Ascending aorta (tissue), 2 donors: ENCODE measurements at regions of chr16 and their contacts with region 1.

Region 1: DNA sequence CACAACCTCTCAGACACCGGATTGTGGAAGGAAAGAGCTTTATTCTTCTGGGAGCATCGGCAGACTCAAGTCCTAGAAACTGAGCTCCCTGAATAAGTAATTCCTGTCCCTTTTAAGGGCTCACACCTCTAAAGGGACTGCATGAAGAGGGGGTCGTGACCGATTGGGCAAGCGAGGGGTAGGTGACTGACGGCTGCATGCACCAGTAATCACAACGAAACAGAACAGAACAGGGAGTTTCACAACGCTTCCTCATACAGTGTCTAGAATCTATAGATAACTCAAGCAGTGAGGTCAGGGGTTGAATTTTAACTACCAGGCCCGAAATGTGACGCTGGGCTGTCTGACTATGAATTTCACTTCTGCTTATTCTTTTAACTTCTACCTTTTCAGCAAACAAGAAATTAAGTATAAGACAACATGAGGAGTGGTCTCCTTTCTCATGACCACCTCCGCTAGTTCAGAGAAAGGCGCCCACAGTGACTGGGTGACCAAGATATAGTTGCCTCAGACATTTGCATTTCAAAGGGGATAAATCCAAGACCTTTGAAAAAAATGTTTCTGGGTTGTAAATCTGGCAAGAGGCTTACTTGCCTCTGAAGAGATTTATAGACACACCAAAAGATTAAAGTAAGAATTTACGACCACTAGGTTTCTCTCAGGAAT is 88.4 kb upstream of the ATF7IP2 start:
- DNase-seq: peak in 1 of 2 donors; percentile 58
- H3K4me3 ChIP-seq: no peak overlapping the region
- H3K27ac ChIP-seq: no peak overlapping the region
- H3K4me1 ChIP-seq: no peaks in the 10 kb centered on the region
- H3K27me3 ChIP-seq: no peaks in the 10 kb centered on the region
- CTCF ChIP-seq: no peak

Region 2: GRCh38 chr16:9275377-9275776 is 1022.1 kb before region 1 on chr16:
- intact Hi-C with region 1: loop called (anchors 5 kb)
- DNase-seq: no peak
- H3K4me3 ChIP-seq: no peak overlapping the region
- H3K27ac ChIP-seq: no peak overlapping the region
- H3K4me1 ChIP-seq: no peaks in the 10 kb centered on the region
- H3K27me3 ChIP-seq: no peaks in the 10 kb centered on the region
- CTCF ChIP-seq: no peak

Region 3: GRCh38 chr16:10332241-10332640 is 34.8 kb after region 1 on chr16:
- intact Hi-C with region 1: no loop called
- DNase-seq: no peak
- H3K4me3 ChIP-seq: no peak overlapping the region
- H3K27ac ChIP-seq: no peak overlapping the region
- H3K4me1 ChIP-seq: no peaks in the 10 kb centered on the region
- H3K27me3 ChIP-seq: no peaks in the 10 kb centered on the region
- CTCF ChIP-seq: no peak